ENCODE measurements at regions of chr5 and their contacts with region 1.

Region 1: GRCh38 chr5:146965761-146966659 is 87.5 kb upstream of the PPP2R2B start:
- DNase-seq: peak; percentile 69
- ATAC-seq: peak; percentile 92
- H3K4me3 ChIP-seq: no peak overlapping the region
- H3K27ac ChIP-seq: no peak overlapping the region
- H3K4me1 ChIP-seq: no peaks in the 10 kb centered on the region
- H3K27me3 ChIP-seq: no peaks in the 10 kb centered on the region
- CTCF ChIP-seq: peak; percentile 85
- POLR2A ChIP-seq: no peak
- RAD21 ChIP-seq: peak; percentile 83

Region 2: DNA sequence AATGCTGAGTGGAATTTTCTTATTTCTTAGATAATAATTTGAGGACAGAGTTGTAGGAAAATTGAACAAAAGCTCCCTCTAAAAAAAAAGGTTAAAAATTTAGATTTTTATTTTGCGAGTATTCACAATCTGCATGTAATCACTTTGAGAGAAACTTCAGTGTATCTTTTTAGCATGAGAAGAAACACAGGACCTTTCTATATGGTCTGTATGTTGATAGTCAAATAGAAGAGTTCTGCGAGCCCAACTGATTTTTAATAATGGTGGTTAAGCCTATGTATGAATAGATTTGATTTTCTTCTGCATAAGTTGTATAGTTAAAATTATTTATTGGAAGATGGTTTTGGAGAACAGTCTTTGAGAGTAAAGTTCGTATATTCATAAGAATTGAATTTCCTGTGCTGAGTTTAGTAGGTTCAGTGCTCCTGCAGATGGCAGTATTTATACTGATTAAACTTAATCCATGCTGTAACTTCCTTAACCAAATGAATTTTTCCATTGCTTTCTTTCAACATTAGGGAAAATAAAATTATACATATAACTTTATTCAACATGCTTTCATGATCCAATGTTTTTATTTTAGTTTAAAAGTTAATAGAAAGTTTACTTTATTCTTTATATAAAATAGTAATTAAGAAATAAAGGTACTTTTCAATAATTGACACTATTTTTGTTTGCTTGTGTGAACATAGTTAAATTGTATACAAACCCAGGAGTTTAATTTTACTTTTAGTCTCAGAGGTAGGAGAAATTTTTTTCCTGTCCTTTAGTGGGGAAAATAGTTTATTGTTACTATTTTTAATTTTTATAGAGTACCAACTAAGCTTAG is 499.3 kb before region 1 on chr5:
- CTCF ChIA-PET with region 1: no interaction called
- POLR2A ChIA-PET with region 1: no interaction called
- dilution Hi-C with region 1: no loop called
- in situ Hi-C with region 1: no loop called
- intact Hi-C with region 1: loop called (anchors 1 kb)
- DNase-seq: peak; percentile 37
- ATAC-seq: peak; percentile 83
- H3K4me3 ChIP-seq: no peak overlapping the region
- H3K27ac ChIP-seq: no peak overlapping the region
- H3K4me1 ChIP-seq: no peaks in the 10 kb centered on the region
- H3K27me3 ChIP-seq: no peaks in the 10 kb centered on the region
- CTCF ChIP-seq: peak; percentile 58
- POLR2A ChIP-seq: no peak
- RAD21 ChIP-seq: no peak

Region 3: GRCh38 chr5:146533260-146533857 is 432.7 kb before region 1 on chr5:
- CTCF ChIA-PET with region 1: interaction called, 17 read pairs
- POLR2A ChIA-PET with region 1: no interaction called
- dilution Hi-C with region 1: loop called (anchors 25 kb)
- in situ Hi-C with region 1: no loop called
- intact Hi-C with region 1: loop called (anchors 1 kb)
- DNase-seq: peak; percentile 50
- ATAC-seq: peak; percentile 97
- H3K4me3 ChIP-seq: no peak overlapping the region
- H3K27ac ChIP-seq: no peak overlapping the region
- H3K4me1 ChIP-seq: no peaks in the 10 kb centered on the region
- H3K27me3 ChIP-seq: peaks cover 5% of the 10 kb centered on the region
- CTCF ChIP-seq: peak; percentile 80
- POLR2A ChIP-seq: no peak
- RAD21 ChIP-seq: peak; percentile 73

Region 4: GRCh38 chr5:146541958-146542849 is 423.8 kb before region 1 on chr5:
- CTCF ChIA-PET with region 1: interaction called, 17 read pairs
- POLR2A ChIA-PET with region 1: no interaction called
- dilution Hi-C with region 1: loop called (anchors 25 kb)
- in situ Hi-C with region 1: loop called (anchors 5 kb)
- intact Hi-C with region 1: loop called (anchors 1 kb)
- DNase-seq: peak; percentile 47
- ATAC-seq: peak; percentile 95
- H3K4me3 ChIP-seq: no peak overlapping the region
- H3K27ac ChIP-seq: no peak overlapping the region
- H3K4me1 ChIP-seq: no peaks in the 10 kb centered on the region
- H3K27me3 ChIP-seq: peaks cover 7% of the 10 kb centered on the region
- CTCF ChIP-seq: peak; percentile 76
- POLR2A ChIP-seq: no peak
- RAD21 ChIP-seq: peak; percentile 76

Region 5: GRCh38 chr5:146662229-146662628 is 303.8 kb before region 1 on chr5:
- CTCF ChIA-PET with region 1: no interaction called
- POLR2A ChIA-PET with region 1: no interaction called
- dilution Hi-C with region 1: no loop called
- in situ Hi-C with region 1: no loop called
- intact Hi-C with region 1: loop called (anchors 1 kb)
- DNase-seq: no peak
- ATAC-seq: no peak
- H3K4me3 ChIP-seq: no peak overlapping the region
- H3K27ac ChIP-seq: no peak overlapping the region
- H3K4me1 ChIP-seq: no peaks in the 10 kb centered on the region
- H3K27me3 ChIP-seq: no peaks in the 10 kb centered on the region
- CTCF ChIP-seq: peak; percentile 46
- POLR2A ChIP-seq: no peak
- RAD21 ChIP-seq: peak; percentile 33

Region 6: GRCh38 chr5:146867996-146868708 is 97.9 kb before region 1 on chr5:
- CTCF ChIA-PET with region 1: no interaction called
- POLR2A ChIA-PET with region 1: no interaction called
- dilution Hi-C with region 1: no loop called
- in situ Hi-C with region 1: no loop called
- intact Hi-C with region 1: no loop called
- DNase-seq: no peak
- ATAC-seq: no peak
- H3K4me3 ChIP-seq: no peak overlapping the region
- H3K27ac ChIP-seq: no peak overlapping the region
- H3K4me1 ChIP-seq: no peaks in the 10 kb centered on the region
- H3K27me3 ChIP-seq: no peaks in the 10 kb centered on the region
- CTCF ChIP-seq: no peak
- POLR2A ChIP-seq: no peak
- RAD21 ChIP-seq: no peak

Region 7: DNA sequence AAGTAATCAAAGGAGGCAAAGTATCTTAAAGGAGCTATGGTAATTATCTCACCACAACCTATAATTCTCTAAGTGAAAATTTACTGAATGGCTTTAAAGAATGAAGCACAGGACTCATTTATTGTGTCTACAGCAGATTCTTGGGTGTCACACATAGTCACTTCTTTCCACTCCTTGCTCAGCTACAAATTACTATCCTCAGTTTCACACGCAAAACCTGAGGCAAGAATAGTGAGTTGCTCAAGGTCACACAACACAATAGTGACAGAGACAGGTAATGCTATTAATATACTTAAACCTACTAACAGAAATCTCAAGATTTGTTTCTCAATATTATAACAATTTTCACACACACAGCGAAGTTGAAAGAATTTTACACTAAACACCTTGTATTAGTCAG is 148.0 kb after region 1 on chr5:
- CTCF ChIA-PET with region 1: no interaction called
- POLR2A ChIA-PET with region 1: no interaction called
- dilution Hi-C with region 1: no loop called
- in situ Hi-C with region 1: no loop called
- intact Hi-C with region 1: no loop called
- DNase-seq: no peak
- ATAC-seq: no peak
- H3K4me3 ChIP-seq: no peak overlapping the region
- H3K27ac ChIP-seq: no peak overlapping the region
- H3K4me1 ChIP-seq: no peaks in the 10 kb centered on the region
- H3K27me3 ChIP-seq: no peaks in the 10 kb centered on the region
- CTCF ChIP-seq: no peak
- POLR2A ChIP-seq: no peak
- RAD21 ChIP-seq: no peak